OCI-LY7 (cell line): ENCODE measurements at regions of chr19 and their contacts with region 1.

Region 1: GRCh38 chr19:40139533-40140287 is 49.0 kb upstream of the ZNF780A start:
- DNase-seq: peak; percentile 70
- H3K4me3 ChIP-seq: no peak overlapping the region
- H3K27ac ChIP-seq: no peak overlapping the region
- H3K4me1 ChIP-seq: peaks cover 26% of the 10 kb centered on the region
- CTCF ChIP-seq: peak; percentile 93

Region 2: GRCh38 chr19:39671738-39672363 is 467.9 kb before region 1 on chr19:
- CTCF ChIA-PET with region 1: no interaction called
- POLR2A ChIA-PET with region 1: no interaction called
- intact Hi-C with region 1: no loop called
- DNase-seq: peak; percentile 73
- H3K4me3 ChIP-seq: no peak overlapping the region
- H3K27ac ChIP-seq: no peak overlapping the region
- H3K4me1 ChIP-seq: no peaks in the 10 kb centered on the region
- CTCF ChIP-seq: peak; percentile 82

Region 3: GRCh38 chr19:40165362-40165937 is 25.7 kb after region 1 on chr19:
- CTCF ChIA-PET with region 1: interaction called, 6 read pairs
- POLR2A ChIA-PET with region 1: no interaction called
- intact Hi-C with region 1: loop called (anchors 1 kb)
- DNase-seq: peak; percentile 65
- H3K4me3 ChIP-seq: no peak overlapping the region
- H3K27ac ChIP-seq: no peak overlapping the region
- H3K4me1 ChIP-seq: peaks cover 16% of the 10 kb centered on the region
- CTCF ChIP-seq: peak; percentile 85

Region 4: DNA sequence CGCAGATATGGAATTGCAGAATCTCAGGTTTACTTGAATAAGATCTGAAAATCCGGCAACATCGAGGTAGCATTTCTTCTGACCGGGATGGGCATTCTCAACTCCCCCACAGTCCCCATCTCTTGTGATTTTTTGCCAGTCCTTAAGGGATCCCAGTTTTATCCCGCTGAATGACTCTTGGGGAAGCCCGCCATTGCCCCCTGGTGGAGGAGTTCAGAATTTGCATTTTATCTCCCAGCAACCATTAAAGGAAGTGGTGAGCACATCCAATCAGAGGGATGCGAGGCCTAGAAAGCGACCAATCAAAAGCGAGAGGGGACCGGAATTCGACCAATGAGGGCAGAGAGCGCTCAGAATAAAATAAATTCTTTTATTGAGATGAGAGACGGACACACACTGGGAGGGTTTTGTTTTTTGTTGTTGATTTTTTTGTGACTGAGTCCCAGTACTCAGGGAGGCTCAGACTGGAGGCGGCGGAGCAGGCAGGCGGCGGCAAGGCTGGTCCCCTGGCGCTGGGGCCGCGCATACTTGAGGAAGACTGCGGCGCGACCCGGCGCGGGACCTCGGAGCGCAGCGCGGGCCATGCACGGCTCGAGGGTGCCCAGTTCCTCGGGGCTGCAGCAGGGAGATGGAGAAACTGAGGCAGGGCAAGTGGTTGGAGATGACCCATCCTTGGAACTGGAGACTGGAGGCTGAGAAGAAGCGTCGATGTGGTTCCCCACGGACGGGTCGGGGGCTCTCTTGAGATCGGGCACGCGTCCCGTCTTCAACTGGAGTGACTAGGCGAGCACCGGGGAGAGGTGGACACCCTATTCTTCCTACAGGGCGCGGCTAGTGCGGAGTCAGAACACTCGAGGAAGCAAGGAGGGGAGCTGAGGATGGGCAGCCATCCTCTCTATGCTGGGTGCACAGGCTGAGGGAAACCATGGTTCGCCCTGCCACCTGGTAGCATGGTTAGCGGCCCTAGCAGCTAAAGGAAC is 82.4 kb after region 1 on chr19:
- CTCF ChIA-PET with region 1: no interaction called
- POLR2A ChIA-PET with region 1: no interaction called
- intact Hi-C with region 1: loop called (anchors 1 kb)
- DNase-seq: peak; percentile 81
- H3K4me3 ChIP-seq: no peak overlapping the region
- H3K27ac ChIP-seq: no peak overlapping the region
- H3K4me1 ChIP-seq: no peaks in the 10 kb centered on the region
- CTCF ChIP-seq: peak; percentile 91

Region 5: DNA sequence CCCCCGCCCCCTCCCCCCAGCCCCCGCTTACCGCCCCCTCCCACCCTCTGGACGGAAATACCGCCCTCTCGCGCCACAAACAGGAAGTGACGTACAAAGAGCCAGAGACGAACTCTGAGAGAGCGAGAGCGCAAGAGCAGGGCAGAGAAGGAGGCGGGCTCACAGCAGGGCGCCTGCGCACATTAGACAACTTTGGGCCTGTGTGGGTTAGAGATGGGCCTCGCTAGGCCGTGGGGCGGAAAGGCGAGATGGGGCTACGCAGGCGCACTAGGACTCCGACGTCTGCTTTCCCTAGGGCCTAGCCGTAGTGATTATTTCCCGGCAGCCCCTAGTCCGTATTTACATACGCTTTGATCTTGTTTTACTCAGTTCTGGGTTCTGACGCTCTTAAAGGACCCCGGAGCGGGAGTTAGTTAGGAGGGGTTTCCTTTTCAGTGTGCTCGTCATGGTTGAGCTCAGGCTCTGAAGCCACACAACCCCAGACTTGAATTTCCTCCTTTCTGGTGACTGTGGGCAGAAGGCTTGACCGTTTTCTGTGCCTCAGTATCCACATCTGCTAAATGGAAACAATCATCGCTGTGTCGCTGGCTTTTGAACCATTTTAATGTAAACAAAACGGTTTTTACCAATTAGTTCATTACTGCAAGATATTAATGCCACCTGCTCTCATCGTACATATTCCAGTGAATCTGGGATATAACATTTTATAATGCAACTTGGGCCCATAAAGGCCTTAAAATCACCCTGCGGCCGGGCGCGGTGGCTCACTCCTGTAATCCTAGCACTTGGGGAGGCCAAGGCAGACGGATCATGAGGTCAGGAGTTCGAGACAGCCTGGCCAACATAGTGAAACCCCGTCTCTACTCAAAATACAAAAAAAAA is 145.9 kb after region 1 on chr19:
- CTCF ChIA-PET with region 1: no interaction called
- POLR2A ChIA-PET with region 1: interaction called, 5 read pairs
- intact Hi-C with region 1: loop called (anchors 10 kb)
- DNase-seq: peak; percentile 100
- H3K4me3 ChIP-seq: peak overlapping the region; percentile 85
- H3K27ac ChIP-seq: peak overlapping the region; percentile 94
- H3K4me1 ChIP-seq: peaks cover 54% of the 10 kb centered on the region
- CTCF ChIP-seq: no peak

Region 6: GRCh38 chr19:40529093-40529954 is 389.6 kb after region 1 on chr19:
- CTCF ChIA-PET with region 1: no interaction called
- POLR2A ChIA-PET with region 1: no interaction called
- intact Hi-C with region 1: loop called (anchors 10 kb)
- DNase-seq: peak; percentile 92
- H3K4me3 ChIP-seq: peak overlapping the region; percentile 61
- H3K27ac ChIP-seq: no peak overlapping the region
- H3K4me1 ChIP-seq: peaks cover 19% of the 10 kb centered on the region
- CTCF ChIP-seq: peak; percentile 90